ENCODE measurements at regions of chr2 and their contacts with region 1.

Region 1: GRCh38 chr2:118221666-118222594 is 133.7 kb downstream of the INSIG2 start:
- DNase-seq: no peak
- ATAC-seq: peak; percentile 87
- H3K4me3 ChIP-seq: no peak overlapping the region
- H3K27ac ChIP-seq: no peak overlapping the region
- H3K4me1 ChIP-seq: peaks cover 14% of the 10 kb centered on the region
- H3K27me3 ChIP-seq: peaks cover 91% of the 10 kb centered on the region
- CTCF ChIP-seq: peak; percentile 66

Region 2: DNA sequence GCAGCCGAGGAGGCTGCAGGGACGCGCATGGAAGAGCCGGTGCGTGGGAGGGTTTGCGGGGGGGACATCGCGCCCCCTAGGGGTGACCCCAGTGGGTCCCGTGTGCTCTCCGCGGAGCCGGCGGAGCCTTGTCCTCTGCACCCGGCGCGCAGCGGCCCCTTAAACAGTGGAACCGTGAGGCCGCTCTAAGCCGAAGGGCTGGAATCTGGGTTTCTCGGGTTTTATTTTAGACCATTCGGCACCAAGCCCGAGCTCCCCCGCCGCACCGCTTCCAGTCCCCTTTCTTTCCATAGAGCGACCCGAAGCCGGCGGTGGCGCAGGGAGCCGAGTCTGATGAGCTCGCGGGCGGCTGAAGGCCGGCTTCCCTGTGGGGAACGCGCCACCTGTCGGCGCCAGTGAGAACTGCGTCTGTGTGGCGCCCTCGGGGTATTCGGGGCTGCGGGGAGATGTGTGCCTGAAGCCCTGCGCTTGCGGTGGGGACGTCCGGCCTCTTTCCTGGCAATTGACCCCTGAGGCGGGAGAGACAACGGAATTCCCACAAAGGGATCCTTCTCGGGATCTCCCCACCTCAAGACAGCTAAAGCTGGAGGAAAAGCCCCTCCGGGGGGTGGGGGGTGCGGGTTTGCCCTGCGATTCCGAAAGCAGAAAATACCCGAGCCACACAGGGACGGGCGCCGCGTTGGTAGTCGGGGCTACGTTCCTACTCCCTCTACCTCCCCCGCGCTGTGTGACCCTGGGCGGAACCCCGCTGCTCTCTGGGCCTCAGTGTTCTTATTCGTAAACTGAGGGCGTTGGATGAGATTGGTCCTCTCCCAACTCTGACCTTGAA is 633.7 kb after region 1 on chr2:
- intact Hi-C with region 1: loop called (anchors 10 kb)
- DNase-seq: peak; percentile 89
- ATAC-seq: peak; percentile 93
- H3K4me3 ChIP-seq: peak overlapping the region; percentile 23
- H3K27ac ChIP-seq: no peak overlapping the region
- H3K4me1 ChIP-seq: peaks cover 20% of the 10 kb centered on the region
- H3K27me3 ChIP-seq: peaks cover 98% of the 10 kb centered on the region
- CTCF ChIP-seq: peak; percentile 97